Activated T-helper 2 cell treated with anti-CD3 and anti-CD28 coated beads, Interferon-gamma antibody, Interleukin-2, Interleukin-4, amounts not matched to agents 10 μg/mL and 5 μg/mL and 100 μg/mL, durations not matched to agents 14 hours and 24 hours and 36 hours (primary cell): ENCODE measurements at regions of chr3 and their contacts with region 1.

Region 1: DNA sequence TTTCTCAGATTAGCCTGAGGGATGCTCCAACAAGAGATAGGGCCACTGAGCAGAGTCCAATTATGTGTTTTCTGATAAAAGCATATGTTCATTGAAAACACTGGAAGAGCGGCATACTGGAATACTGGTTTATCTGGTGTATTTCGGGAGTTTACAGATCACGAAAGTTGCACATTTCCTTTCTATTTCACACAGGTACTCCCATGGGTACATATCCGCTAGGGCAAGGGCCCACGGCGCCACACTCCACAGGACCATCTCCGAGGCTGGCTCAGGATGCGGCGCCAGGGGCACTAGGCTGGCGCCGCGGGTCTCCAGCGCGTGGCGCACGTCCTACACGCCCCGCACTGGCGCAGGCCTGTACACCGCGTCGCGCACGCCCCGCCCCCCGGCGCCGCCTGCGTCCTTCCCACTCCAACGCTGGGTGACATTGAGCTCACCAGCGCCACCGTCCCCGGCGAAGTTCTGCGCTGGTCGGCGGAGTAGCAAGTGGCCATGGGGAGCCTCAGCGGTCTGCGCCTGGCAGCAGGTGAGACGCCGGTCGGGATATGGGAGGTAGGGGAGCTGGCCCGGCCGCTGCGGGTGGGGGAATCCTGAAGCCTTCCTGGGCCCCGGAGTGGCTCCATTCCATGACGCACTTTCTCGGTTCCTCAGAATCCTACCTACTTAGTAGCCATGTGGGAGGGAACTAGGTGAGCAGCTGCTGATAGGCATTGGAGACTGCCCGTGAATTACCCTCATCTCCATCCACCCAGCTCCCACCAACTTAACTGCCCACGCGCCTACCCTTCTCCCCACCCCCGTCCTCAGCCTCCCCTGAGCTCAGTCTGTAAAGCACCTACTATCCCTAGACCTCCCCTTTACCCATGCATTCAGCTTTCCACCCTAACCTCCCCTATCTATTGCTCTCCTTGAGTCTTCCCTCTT is at the start of gene FAM162A:
- DNase-seq: peak; percentile 92
- H3K4me3 Mint-ChIP-seq: peak within 1 kb of the TSS; percentile 90
- H3K27ac Mint-ChIP-seq: peak within 1 kb of the TSS; percentile 94
- H3K4me1 Mint-ChIP-seq: peaks cover 62% of the 10 kb centered on the region
- H3K27me3 Mint-ChIP-seq: no peaks in the 10 kb centered on the region
- total RNA-seq, gene FAM162A: 82.2 and 85.8 TPM in 2 replicates

Region 2: GRCh38 chr3:121834696-121835464 is 549.2 kb before region 1 on chr3 and contains the starts of genes EAF2 and IQCB1:
- intact Hi-C with region 1: loop called (anchors 10 kb)
- DNase-seq: peak; percentile 96
- H3K4me3 Mint-ChIP-seq: peak within 1 kb of the TSS; percentile 98
- H3K27ac Mint-ChIP-seq: peak within 1 kb of the TSS; percentile 97
- H3K4me1 Mint-ChIP-seq: peaks cover 61% of the 10 kb centered on the region
- H3K27me3 Mint-ChIP-seq: no peaks in the 10 kb centered on the region
- total RNA-seq, gene EAF2: 18.5 and 19.2 TPM in 2 replicates
- total RNA-seq, gene IQCB1: 43.4 and 44.0 TPM in 2 replicates

Region 3: DNA sequence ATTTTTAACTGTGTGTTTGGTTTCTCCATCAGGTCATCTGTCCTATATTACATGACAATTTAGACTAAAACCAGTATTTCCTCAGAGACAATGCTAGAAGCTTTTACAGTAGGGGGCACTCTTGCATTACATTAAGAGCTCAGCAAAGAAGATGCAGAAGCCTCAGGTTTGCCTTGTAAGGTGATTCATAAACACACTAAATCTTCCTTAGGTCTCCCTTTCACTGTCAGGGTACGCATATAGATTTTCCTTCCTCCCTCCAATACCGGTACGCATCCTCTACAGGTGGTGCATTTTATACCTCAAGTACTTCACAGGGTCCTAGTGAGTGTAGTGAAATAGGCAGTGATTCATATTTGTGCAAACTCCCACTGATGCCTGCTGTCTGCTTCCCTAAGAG is 282.4 kb before region 1 on chr3:
- intact Hi-C with region 1: loop called (anchors 2 kb)
- DNase-seq: no peak
- H3K4me3 Mint-ChIP-seq: no peak overlapping the region
- H3K27ac Mint-ChIP-seq: peak overlapping the region; percentile 62
- H3K4me1 Mint-ChIP-seq: peaks cover 38% of the 10 kb centered on the region
- H3K27me3 Mint-ChIP-seq: no peaks in the 10 kb centered on the region

Region 4: GRCh38 chr3:122356415-122356814 is 27.6 kb before region 1 on chr3:
- intact Hi-C with region 1: no loop called
- DNase-seq: no peak
- H3K4me3 Mint-ChIP-seq: no peak overlapping the region
- H3K27ac Mint-ChIP-seq: no peak overlapping the region
- H3K4me1 Mint-ChIP-seq: peaks cover 2% of the 10 kb centered on the region
- H3K27me3 Mint-ChIP-seq: no peaks in the 10 kb centered on the region

Region 5: GRCh38 chr3:122415720-122416654 is 32.0 kb after region 1 on chr3 and contains the start of gene WDR5B:
- intact Hi-C with region 1: loop called (anchors 1 kb)
- DNase-seq: peak; percentile 97
- H3K4me3 Mint-ChIP-seq: peak within 1 kb of the TSS; percentile 93
- H3K27ac Mint-ChIP-seq: peak within 1 kb of the TSS; percentile 95
- H3K4me1 Mint-ChIP-seq: peaks cover 22% of the 10 kb centered on the region
- H3K27me3 Mint-ChIP-seq: no peaks in the 10 kb centered on the region
- total RNA-seq, gene WDR5B: 4.9 and 5.5 TPM in 2 replicates

Region 6: DNA sequence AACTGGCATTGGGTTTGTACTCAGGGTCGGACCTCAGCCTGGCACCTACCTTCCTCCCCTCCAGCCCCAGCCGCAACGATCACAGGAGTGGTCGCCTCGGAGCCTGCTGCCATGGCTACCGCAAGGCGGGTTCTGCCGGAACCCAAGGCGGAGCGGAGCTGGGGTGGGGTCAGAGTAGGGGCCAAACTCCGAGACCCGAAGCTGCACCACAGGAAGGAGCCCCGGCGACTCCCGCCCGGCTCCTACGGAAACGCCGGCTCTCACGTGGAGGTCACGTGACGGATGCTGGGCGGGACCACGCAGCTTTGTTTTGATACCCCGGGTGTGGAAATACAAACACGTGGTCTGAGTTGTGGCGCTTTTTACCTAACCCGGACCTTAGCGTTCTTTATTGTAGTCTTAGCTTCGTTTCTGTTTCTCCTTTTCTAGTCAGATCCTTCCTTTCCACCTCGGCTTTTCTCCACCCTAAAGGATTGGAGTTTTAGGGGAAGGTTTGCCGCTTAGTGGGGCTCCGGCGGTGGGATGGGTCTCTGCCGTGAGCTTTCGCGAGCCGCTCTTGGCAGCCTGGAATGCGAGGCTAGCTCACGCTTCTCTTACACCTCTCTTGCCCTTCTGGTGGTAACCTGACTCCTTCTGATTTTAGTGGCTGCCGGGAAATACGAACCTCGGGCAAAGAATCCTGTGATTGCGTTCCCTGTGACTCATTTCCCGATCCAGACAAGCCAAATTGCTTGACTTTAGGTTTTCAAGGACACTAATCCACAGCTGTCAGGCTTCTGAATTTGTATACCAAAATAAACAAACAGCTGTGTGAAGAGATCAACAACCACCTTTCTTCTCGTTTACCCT is 409.8 kb after region 1 on chr3 and contains the start of gene HSPBAP1:
- intact Hi-C with region 1: loop called (anchors 5 kb)
- DNase-seq: peak; percentile 87
- H3K4me3 Mint-ChIP-seq: peak within 1 kb of the TSS; percentile 88
- H3K27ac Mint-ChIP-seq: peak within 1 kb of the TSS; percentile 77
- H3K4me1 Mint-ChIP-seq: peaks cover 32% of the 10 kb centered on the region
- H3K27me3 Mint-ChIP-seq: peaks cover 3% of the 10 kb centered on the region
- total RNA-seq, gene HSPBAP1: 6.6 and 8.0 TPM in 2 replicates

Region 7: GRCh38 chr3:123584988-123585937 is 1201.2 kb after region 1 on chr3 and contains the start of gene HACD2:
- intact Hi-C with region 1: loop called (anchors 5 kb)
- DNase-seq: peak; percentile 92
- H3K4me3 Mint-ChIP-seq: no peak within 1 kb of the TSS
- H3K27ac Mint-ChIP-seq: peak within 1 kb of the TSS; percentile 72
- H3K4me1 Mint-ChIP-seq: peaks cover 20% of the 10 kb centered on the region
- H3K27me3 Mint-ChIP-seq: no peaks in the 10 kb centered on the region
- total RNA-seq, gene HACD2: 29.5 and 32.5 TPM in 2 replicates